WTC11 (cell line): ENCODE measurements at regions of chr22 and their contacts with region 1.

Region 1: DNA sequence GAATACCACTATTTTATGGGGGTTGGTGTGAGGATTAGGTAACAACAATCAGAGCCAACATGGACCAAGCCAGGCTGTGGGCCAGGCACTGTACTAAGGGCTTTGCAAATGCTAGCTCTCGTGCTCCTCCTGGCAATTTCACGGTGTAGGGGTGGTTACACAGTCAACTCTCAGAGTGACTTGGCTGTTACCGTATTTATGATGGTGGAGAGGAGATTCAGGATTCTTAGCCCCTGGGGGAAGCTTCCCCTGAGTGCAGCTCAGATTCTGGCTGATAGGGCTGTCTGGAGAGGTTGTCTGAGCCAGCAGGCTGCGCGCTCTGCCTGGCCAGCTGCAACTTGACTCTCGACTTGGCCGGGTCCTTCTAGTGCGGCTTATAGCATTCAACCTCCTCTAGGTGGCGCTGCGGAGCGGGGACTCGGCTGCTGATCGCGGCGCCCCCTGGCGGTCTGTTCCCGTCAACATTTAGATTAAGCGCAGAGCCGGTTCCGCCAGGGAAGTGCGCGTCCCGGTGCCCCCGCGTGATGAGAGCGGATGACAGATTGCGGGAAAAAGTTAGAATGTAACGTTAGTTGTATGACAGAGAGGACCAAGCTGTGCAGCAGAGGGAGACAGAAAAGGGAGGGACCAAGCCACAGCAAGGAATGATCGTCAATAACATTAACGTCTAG is 4.5 kb upstream of the NCF4 start:
- DNase-seq: peak; percentile 94
- ATAC-seq: peak; percentile 97
- H3K4me3 Mint-ChIP-seq: peak overlapping the region; percentile 37
- H3K27ac Mint-ChIP-seq: peak overlapping the region; percentile 20; the same call in 1 of the 2 replicates
- H3K4me1 Mint-ChIP-seq: peaks cover 9% of the 10 kb centered on the region
- H3K27me3 Mint-ChIP-seq: peaks cover 29% of the 10 kb centered on the region
- CTCF ChIP-seq: peak; percentile 100

Region 2: DNA sequence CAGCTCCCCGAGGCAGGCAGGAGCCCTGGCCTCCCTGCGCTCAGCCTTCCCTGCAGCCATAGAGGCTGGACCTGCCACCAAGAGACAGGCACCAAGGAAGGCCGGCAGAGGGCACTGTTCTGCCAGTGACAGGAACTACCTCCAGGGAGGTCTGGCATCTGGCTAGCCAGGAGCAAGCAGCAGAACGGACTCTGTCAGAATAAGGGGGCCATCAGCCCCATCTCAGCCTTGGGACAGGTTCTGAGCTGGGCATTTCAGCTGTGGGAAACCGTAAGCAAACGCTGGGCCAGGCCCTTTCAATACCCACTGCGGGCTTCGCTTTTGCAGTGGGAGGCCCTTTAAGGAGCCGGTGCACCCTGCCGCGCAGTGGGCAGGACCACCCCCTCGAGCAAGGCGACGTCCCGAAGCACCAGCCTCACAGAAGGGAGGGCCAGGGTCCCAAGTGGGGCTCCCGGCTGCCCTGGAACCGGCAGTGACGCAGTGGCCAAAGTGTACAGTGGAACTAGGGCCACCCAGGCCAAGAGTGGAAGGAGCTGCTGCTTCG is 98.5 kb before region 1 on chr22:
- CTCF ChIA-PET with region 1: interaction called, 33 read pairs
- POLR2A ChIA-PET with region 1: no interaction called
- DNase-seq: peak; percentile 93
- ATAC-seq: peak; percentile 92
- H3K4me3 Mint-ChIP-seq: no peak overlapping the region
- H3K27ac Mint-ChIP-seq: no peak overlapping the region
- H3K4me1 Mint-ChIP-seq: no peaks in the 10 kb centered on the region
- H3K27me3 Mint-ChIP-seq: peaks cover 12% of the 10 kb centered on the region
- CTCF ChIP-seq: peak; percentile 88

Region 3: GRCh38 chr22:36787204-36787988 is 68.9 kb before region 1 on chr22:
- CTCF ChIA-PET with region 1: interaction called, 58 read pairs
- POLR2A ChIA-PET with region 1: no interaction called
- DNase-seq: no peak
- ATAC-seq: no peak
- H3K4me3 Mint-ChIP-seq: no peak overlapping the region
- H3K27ac Mint-ChIP-seq: no peak overlapping the region
- H3K4me1 Mint-ChIP-seq: peaks cover 14% of the 10 kb centered on the region
- H3K27me3 Mint-ChIP-seq: peaks cover 13% of the 10 kb centered on the region
- CTCF ChIP-seq: no peak

Region 4: GRCh38 chr22:36840106-36840505 is 16.1 kb before region 1 on chr22:
- CTCF ChIA-PET with region 1: interaction called, 14 read pairs
- POLR2A ChIA-PET with region 1: no interaction called
- DNase-seq: no peak
- ATAC-seq: no peak
- H3K4me3 Mint-ChIP-seq: no peak overlapping the region
- H3K27ac Mint-ChIP-seq: no peak overlapping the region
- H3K4me1 Mint-ChIP-seq: no peaks in the 10 kb centered on the region
- H3K27me3 Mint-ChIP-seq: peaks cover 14% of the 10 kb centered on the region
- CTCF ChIP-seq: no peak

Region 5: DNA sequence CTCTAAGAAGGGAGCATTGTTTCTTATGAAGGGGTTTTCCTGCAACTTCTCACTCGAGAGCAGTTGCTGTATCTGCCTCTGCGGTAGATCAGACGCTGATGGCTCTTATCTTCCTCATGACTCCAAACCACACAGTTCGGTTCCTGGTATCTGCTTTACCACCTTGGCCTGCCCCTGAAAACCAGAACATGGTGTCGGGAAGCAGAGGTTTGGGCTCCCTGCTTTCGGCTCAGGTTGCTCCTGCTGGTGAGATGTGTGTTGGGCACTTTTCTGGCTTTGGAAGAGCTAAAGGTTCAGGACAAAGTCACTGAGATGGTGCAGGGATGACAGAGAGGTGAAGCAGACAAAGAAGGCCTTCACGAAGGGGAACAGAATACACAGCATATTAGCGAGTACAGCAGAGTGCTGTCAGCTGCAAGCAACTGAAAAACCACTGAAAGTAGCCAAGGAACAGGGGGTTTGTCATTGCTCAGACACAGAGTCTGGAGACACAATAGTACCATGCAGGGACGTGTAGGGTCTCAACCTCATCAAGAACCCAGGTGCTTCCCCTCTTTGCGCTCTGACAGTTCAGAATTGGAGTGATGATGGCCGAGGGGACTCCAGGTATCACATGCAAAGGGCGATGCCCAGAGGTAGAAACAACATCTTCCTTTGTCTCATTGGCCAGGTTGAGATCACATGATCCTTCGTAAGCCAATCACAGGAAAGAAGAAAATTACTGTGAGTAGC is 45.3 kb after region 1 on chr22:
- CTCF ChIA-PET with region 1: interaction called, 15 read pairs
- POLR2A ChIA-PET with region 1: no interaction called
- DNase-seq: no peak
- ATAC-seq: no peak; the same call in 1 of the 2 replicates
- H3K4me3 Mint-ChIP-seq: peak overlapping the region; percentile 20; the same call in 1 of the 2 replicates
- H3K27ac Mint-ChIP-seq: peak overlapping the region; percentile 93
- H3K4me1 Mint-ChIP-seq: peaks cover 27% of the 10 kb centered on the region
- H3K27me3 Mint-ChIP-seq: peaks cover 47% of the 10 kb centered on the region
- CTCF ChIP-seq: no peak

Region 6: GRCh38 chr22:36954211-36954891 is 98.1 kb after region 1 on chr22:
- CTCF ChIA-PET with region 1: no interaction called
- POLR2A ChIA-PET with region 1: no interaction called
- DNase-seq: no peak
- ATAC-seq: no peak
- H3K4me3 Mint-ChIP-seq: no peak overlapping the region
- H3K27ac Mint-ChIP-seq: no peak overlapping the region
- H3K4me1 Mint-ChIP-seq: no peaks in the 10 kb centered on the region
- H3K27me3 Mint-ChIP-seq: peaks cover 15% of the 10 kb centered on the region
- CTCF ChIP-seq: no peak